Right cardiac atrium (tissue), 5 donors: ENCODE measurements at regions of chr11 and their contacts with region 1.

Region 1: DNA sequence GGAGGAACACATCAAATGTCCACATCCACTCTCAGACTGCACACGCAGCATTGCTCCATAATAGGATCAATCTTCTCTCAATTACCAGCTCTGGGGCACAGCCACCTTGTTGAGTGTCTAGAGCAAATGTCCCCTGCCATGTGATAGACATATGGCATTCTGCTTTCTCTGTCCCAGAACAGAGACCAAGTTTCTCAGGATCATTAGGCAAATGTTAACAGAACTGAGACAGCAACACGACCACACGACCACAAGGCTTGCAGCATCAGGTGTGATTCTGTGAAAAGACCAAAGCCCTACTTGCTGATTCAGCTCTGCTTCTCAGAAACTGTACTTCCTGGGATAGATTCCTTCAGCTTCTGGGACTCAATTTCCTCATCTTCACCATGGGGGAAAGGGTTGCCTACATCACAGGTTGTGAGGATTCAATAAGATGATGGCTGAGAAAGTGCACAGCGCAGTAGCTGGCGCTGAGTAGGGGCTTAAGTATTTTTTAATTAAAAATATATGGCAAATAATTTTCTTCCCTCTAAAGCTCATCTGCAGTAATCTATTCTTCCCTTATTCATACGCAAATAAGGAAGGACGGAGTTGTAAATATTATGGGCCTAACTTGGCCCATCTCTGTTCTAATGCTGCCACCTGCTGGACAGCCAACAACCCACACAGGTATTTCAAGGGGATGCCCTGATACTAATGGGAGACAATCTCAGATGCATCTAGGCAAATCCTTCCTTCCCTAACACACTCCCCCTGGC is 54.3 kb upstream of the USP47 start:
- DNase-seq: peak; percentile 61 to 83 (median 72)
- ATAC-seq: peak; percentile 90 to 92
- H3K4me3 ChIP-seq: no peak overlapping the region
- H3K27ac ChIP-seq: no peak overlapping the region
- H3K4me1 ChIP-seq: no peaks in the 10 kb centered on the region
- H3K27me3 ChIP-seq: no peaks in the 10 kb centered on the region

Region 2: DNA sequence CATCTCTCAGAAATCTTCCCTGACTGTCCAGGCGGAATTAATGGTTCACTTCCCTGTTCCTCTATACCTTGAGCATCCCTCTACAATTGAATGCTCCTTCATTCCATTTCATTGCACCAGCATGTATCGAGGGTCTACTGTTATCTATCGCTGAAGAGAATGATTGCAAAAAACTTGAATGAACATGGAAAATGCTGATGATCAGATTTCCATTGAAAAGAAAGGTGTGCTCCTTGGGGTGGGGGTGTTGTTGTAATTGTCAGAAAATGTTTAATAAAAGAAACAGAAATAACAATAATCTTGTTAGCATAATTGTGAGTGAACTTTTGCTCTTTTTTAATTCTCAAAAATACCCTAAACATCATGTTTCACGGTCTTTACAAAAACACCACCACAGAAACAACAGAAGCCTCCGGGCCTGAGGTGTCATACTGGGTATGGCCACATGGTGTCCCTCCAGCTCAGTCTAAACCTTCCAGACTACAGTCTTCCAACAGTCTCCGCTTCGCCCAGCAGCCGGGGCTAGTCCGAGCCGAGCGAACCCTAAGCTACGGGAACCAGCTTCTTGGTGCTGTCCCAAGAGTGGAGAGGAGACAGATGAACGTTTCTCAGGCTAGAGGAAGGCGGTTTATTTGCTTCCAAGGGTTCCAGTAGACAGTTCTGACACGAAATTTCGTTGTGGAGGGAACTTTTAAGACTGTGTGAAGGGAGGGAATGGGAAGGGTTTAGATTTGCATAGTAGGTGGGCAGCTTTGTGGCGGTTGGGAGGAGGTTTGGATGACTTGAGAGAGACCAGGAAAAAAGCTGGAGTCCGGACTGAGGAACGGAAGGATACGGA is 853.8 kb before region 1 on chr11:
- intact Hi-C with region 1: loop called in 1 of 4 experiments (anchors 10 kb)
- DNase-seq: peak; percentile 90 to 96 (median 95)
- ATAC-seq: peak; percentile 87 to 90
- H3K4me3 ChIP-seq: peak overlapping the region; percentile 52
- H3K27ac ChIP-seq: peak overlapping the region; percentile 83
- H3K4me1 ChIP-seq: peaks cover 2% of the 10 kb centered on the region
- H3K27me3 ChIP-seq: no peaks in the 10 kb centered on the region

Region 3: GRCh38 chr11:11028017-11028692 is 759.3 kb before region 1 on chr11:
- intact Hi-C with region 1: loop called in 3 of 4 experiments (anchors 2 to 5 kb)
- DNase-seq: peak; percentile 64 to 89 (median 83)
- ATAC-seq: peak; percentile 78 to 84
- H3K4me3 ChIP-seq: no peak overlapping the region
- H3K27ac ChIP-seq: no peak overlapping the region
- H3K4me1 ChIP-seq: no peaks in the 10 kb centered on the region
- H3K27me3 ChIP-seq: no peaks in the 10 kb centered on the region

Region 4: DNA sequence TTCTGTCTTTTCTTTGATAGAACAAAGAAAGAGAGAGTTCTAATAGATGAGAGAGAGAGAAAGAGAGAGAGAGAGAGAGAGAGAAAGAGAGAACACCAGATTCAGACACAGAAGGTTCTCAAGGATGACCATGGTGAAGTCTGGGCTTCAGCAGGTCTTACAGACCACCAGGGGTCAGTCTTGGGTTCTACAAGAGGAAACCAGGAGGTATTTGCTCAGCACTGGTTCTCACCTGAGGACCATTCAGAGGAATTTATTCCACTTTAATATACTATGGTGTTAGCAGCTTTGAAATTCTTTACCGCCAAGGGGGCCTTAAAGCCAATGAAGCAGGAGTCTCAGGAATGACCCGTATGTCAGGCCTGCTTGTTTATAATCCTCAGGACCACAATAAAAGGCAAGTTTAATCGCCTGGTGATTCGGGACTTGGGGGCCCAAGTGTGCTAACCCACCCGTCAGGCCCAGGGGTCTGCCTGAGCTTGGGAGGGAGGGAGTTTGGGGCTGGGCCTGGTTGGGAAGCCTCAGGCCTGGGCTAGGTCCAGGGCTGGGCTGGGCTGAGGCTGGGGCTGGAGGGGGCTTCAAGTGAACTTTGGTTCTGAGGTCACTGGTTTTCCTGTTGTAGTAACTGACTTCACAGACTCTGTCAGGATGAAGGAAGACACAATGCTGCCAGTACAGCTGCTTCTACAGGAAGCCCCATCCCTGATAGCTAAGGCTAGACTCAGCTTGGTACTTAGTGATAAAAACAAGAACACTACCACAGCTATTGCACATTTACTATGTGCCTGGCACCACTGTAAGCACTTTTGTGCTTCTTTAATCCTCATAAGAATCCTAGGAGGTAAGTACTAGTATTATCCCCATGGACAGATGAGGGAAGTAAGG is 750.4 kb before region 1 on chr11:
- intact Hi-C with region 1: loop called in 1 of 4 experiments (anchors 2 kb)
- DNase-seq: peak in 1 of 3 donors; percentile 57
- ATAC-seq: peak; percentile 78 to 84
- H3K4me3 ChIP-seq: no peak overlapping the region
- H3K27ac ChIP-seq: no peak overlapping the region
- H3K4me1 ChIP-seq: no peaks in the 10 kb centered on the region
- H3K27me3 ChIP-seq: no peaks in the 10 kb centered on the region

Region 5: DNA sequence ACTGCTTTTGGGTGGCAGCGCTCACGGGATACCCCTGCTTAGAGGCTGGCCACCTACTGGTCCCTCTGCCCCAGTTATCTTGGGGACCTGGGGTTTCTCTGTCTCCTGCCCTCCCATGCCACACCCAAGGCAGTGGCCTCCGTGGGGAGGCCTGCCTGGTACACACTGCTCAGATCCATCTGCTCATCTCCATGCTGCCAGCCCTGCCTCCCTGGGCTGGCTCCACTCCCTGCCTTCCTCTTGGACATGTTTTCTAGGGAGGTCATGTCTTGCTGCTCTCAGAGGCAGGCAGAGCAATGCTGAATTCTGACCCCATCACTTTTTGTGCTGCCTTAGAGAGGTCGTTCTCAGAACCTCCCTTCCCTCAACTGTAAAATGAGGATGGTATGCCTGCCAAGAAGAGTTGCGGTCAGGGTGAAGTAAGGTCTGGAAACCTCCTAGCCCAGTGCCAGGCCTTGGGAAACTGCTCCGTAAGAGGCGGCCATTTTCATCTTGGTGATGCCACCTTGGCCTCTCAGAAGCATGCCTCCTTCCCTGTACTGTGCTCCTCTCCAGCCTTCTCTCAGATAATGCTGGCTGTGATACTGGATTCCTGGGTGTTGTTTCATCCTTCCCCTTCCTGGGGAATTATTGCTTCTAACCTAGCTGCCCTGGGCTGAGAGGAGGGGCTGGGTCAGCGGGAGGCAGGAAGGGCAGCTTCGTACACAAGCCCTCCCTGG is 743.2 kb before region 1 on chr11:
- intact Hi-C with region 1: loop called in 1 of 4 experiments (anchors 5 kb)
- DNase-seq: no peak
- ATAC-seq: peak in 1 of 2 donors; percentile 23
- H3K4me3 ChIP-seq: no peak overlapping the region
- H3K27ac ChIP-seq: no peak overlapping the region
- H3K4me1 ChIP-seq: no peaks in the 10 kb centered on the region
- H3K27me3 ChIP-seq: no peaks in the 10 kb centered on the region

Region 6: GRCh38 chr11:11265994-11266606 is 521.4 kb before region 1 on chr11:
- intact Hi-C with region 1: loop called in 1 of 4 experiments (anchors 10 kb)
- DNase-seq: peak; percentile 49 to 81 (median 75)
- ATAC-seq: peak; percentile 32 to 61
- H3K4me3 ChIP-seq: no peak overlapping the region
- H3K27ac ChIP-seq: no peak overlapping the region
- H3K4me1 ChIP-seq: no peaks in the 10 kb centered on the region
- H3K27me3 ChIP-seq: no peaks in the 10 kb centered on the region

Region 7: DNA sequence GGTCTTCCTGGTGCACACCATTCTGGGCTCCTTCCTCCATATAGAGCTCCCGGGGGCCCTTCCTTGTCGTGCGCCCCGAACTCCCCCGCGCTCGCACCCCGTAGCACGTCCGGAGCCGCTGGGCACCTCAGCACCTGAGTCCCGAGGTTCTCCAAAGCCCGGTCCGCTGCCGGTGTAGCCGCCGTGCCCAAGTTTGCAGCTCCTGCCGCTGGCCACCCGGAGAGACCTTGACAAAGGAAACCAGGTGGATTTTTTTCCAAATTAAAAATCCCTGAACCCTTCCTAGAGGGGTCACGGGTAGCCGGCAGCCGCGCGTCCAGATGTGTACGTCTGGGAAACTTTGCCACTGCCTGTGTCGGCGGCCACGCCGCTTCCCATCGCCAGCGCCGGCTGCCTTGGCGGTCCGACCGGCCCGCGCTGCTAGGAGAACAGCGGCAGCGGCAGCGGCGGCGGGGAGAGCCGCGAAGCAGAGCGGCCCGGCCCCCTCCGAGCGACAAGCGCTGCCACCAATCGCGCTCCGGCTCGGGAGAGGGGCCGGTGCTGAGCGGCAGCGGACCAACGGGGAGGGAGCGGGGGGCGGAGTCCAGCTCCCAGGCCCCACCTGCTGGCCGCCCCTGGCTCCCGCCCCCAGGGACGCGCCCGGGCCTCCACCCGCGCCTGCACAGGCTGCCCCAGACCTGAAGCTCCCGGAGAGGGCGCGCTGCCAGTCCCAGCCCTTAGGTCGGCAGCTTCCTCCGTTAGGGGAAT is 165.7 kb before region 1 on chr11 and contains the start of gene GALNT18:
- intact Hi-C with region 1: loop called in 1 of 4 experiments (anchors 10 kb)
- DNase-seq: peak; percentile 94 to 97 (median 97)
- ATAC-seq: peak; percentile 98
- H3K4me3 ChIP-seq: peak within 1 kb of the TSS; percentile 76
- H3K27ac ChIP-seq: peak within 1 kb of the TSS; percentile 77
- H3K4me1 ChIP-seq: peaks cover 3% of the 10 kb centered on the region
- H3K27me3 ChIP-seq: no peaks in the 10 kb centered on the region
- total RNA-seq, gene GALNT18: 17.5 to 32.2 (median 25.5) TPM